CD4-positive, alpha-beta memory T cell (primary cell): ENCODE measurements at regions of chr12 and their contacts with region 1.

Region 1: DNA sequence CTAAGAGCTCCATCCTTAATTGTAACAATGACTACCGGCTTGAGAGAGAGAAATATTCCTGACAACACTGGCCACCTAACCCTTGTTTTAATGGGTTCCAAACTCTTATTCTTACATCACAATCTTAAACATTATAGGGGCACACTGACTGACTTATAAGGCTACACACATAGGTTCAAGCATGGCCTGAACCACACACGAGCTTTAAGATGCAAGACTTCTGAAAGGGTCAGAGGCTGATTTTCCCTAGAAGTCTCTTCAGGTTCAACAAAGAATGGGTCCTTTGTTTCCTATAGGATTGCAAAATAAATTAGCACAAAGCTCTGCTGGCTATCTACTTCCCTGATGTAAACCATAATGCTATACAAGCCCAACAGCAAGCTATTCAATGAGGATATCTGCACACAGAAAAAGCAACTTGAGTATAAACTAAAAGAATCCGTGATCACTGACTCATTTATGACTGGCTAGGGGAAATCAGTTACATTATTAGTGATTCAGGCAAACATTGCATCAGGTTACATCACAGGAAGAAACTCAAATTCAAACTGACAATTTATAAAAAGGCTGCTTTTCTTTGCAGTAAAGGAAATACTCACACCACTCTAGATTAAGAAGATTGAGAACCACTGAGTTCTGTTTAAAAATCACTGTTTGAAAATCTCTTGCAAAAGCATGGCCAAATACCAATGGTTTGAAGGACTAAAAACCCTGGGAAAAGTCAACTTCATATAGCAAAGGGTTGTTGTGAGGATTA is 8.5 kb downstream of the BTG1 start:
- DNase-seq: no peak
- H3K4me3 ChIP-seq: peak overlapping the region; percentile 83 to 89
- H3K4me3 Mint-ChIP-seq: peak overlapping the region; percentile 87 to 100 (median 100)
- H3K27ac ChIP-seq: peak overlapping the region; percentile 86
- H3K27ac Mint-ChIP-seq: peak overlapping the region; percentile 83 to 100 (median 99)
- H3K4me1 ChIP-seq: peaks cover 52% of the 10 kb centered on the region
- H3K4me1 Mint-ChIP-seq: peaks cover 43 to 59% (median 49%) of the 10 kb centered on the region in 4 donors
- H3K27me3 ChIP-seq: no peaks in the 10 kb centered on the region
- H3K27me3 Mint-ChIP-seq: no peaks in the 10 kb centered on the region

Region 2: DNA sequence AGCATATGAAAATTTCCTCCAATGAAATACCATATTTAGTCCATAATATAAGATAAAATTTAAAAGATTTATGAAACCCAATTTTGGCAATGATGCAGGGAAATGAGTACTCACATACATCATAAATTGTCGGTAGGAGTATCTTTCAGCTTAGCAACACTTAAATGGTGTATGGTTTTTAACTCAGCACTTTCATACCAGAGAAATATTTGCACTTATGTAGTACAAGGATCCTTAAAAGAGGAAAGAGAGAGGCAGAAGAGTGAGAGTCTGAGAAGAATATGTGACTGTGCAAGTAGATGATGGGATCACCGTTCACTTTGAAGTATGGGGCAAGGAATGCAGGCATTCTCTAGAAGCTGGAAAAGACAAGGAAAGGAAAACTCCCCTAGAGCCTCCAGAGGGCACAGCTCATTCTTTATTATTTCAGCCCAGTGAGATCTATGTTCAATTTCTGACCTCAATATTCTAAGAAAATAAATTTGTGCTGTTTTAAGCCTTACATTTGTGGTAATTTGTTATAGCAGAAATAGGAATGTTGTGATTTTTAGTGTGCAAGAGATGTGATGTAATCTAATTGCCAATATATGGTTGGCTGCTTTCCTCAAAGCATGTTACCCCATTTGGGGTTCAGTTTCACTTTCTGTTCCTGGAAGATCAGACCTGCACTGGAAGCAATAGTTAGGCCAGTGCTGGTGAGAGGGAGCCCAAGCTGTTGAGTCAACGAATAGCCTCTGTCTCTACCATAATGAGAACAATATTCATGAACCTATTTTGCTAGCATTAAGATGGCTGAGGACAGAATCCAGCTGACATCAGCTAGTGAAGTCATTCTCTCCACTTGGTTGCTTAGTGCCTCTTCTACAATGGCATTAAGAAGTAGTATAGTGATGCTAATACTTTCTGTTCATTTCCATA is 574.9 kb before region 1 on chr12:
- CTCF ChIA-PET with region 1: no interaction called
- POLR2A ChIA-PET with region 1: interaction called, 11 read pairs
- intact Hi-C with region 1: no loop called
- DNase-seq: peak in 4 of 5 donors; percentile 11 to 25 (median 14)
- H3K4me3 ChIP-seq: no peak overlapping the region
- H3K4me3 Mint-ChIP-seq: peak overlapping the region; percentile 25 to 77 (median 64)
- H3K27ac ChIP-seq: no peak overlapping the region
- H3K27ac Mint-ChIP-seq: peak overlapping the region in 6 of 7 donors; percentile 15 to 78 (median 44)
- H3K4me1 ChIP-seq: peaks cover 16% of the 10 kb centered on the region
- H3K4me1 Mint-ChIP-seq: peaks cover 18 to 27% (median 19%) of the 10 kb centered on the region in 4 donors
- H3K27me3 ChIP-seq: no peaks in the 10 kb centered on the region
- H3K27me3 Mint-ChIP-seq: no peaks in the 10 kb centered on the region

Region 3: GRCh38 chr12:91991399-91992187 is 145.6 kb before region 1 on chr12:
- CTCF ChIA-PET with region 1: interaction called, 52 read pairs
- POLR2A ChIA-PET with region 1: interaction called, 183 read pairs
- intact Hi-C with region 1: no loop called
- DNase-seq: peak in 4 of 5 donors; percentile 51 to 67 (median 54)
- H3K4me3 ChIP-seq: no peak overlapping the region
- H3K4me3 Mint-ChIP-seq: no peak overlapping the region
- H3K27ac ChIP-seq: no peak overlapping the region
- H3K27ac Mint-ChIP-seq: peak overlapping the region in 5 of 7 donors; percentile 22 to 85 (median 70)
- H3K4me1 ChIP-seq: peaks cover 27% of the 10 kb centered on the region
- H3K4me1 Mint-ChIP-seq: peaks cover 18 to 37% (median 28%) of the 10 kb centered on the region in 4 donors
- H3K27me3 ChIP-seq: no peaks in the 10 kb centered on the region
- H3K27me3 Mint-ChIP-seq: no peaks in the 10 kb centered on the region

Region 4: GRCh38 chr12:92041742-92042141 is 95.4 kb before region 1 on chr12:
- CTCF ChIA-PET with region 1: interaction called, 25 read pairs
- POLR2A ChIA-PET with region 1: interaction called, 525 read pairs
- intact Hi-C with region 1: no loop called
- DNase-seq: peak; percentile 42 to 58 (median 48)
- H3K4me3 ChIP-seq: no peak overlapping the region
- H3K4me3 Mint-ChIP-seq: peak overlapping the region in 7 of 8 donors; percentile 14 to 84 (median 64)
- H3K27ac ChIP-seq: no peak overlapping the region
- H3K27ac Mint-ChIP-seq: peak overlapping the region; percentile 54 to 90 (median 82)
- H3K4me1 ChIP-seq: peaks cover 69% of the 10 kb centered on the region
- H3K4me1 Mint-ChIP-seq: peaks cover 46 to 87% (median 63%) of the 10 kb centered on the region in 4 donors
- H3K27me3 ChIP-seq: no peaks in the 10 kb centered on the region
- H3K27me3 Mint-ChIP-seq: no peaks in the 10 kb centered on the region

Region 5: DNA sequence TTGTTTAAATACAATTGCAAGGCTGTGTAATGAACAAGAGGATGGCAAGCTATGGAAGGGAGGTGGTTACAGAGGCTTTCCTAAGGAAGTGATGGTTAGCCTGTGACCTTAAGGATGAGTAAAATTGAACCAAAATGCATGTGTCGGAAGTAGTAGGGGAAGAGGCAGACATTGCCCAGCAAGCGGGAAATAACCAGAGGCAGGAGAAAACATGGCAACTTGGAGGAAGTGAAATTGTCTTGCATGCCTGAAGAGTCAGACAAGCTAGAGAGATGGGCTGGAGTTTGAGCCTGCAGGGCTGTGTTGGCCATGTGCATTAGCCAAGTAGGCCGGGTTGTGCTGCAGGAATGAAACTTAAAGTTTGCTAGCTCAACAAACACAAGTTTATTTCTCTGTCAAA is 87.7 kb before region 1 on chr12:
- CTCF ChIA-PET with region 1: interaction called, 4 read pairs
- POLR2A ChIA-PET with region 1: interaction called, 525 read pairs
- intact Hi-C with region 1: no loop called
- DNase-seq: peak in 1 of 5 donors; percentile 35
- H3K4me3 ChIP-seq: no peak overlapping the region
- H3K4me3 Mint-ChIP-seq: peak overlapping the region in 2 of 8 donors; percentile 49 to 51
- H3K27ac ChIP-seq: no peak overlapping the region
- H3K27ac Mint-ChIP-seq: peak overlapping the region in 2 of 7 donors; percentile 11 to 31
- H3K4me1 ChIP-seq: peaks cover 56% of the 10 kb centered on the region
- H3K4me1 Mint-ChIP-seq: peaks cover 36 to 82% (median 59%) of the 10 kb centered on the region in 4 donors
- H3K27me3 ChIP-seq: no peaks in the 10 kb centered on the region
- H3K27me3 Mint-ChIP-seq: no peaks in the 10 kb centered on the region

Region 6: GRCh38 chr12:92059976-92060375 is 77.2 kb before region 1 on chr12:
- CTCF ChIA-PET with region 1: interaction called, 3 read pairs
- POLR2A ChIA-PET with region 1: interaction called, 113 read pairs
- intact Hi-C with region 1: loop called (anchors 5 kb)
- DNase-seq: no peak
- H3K4me3 ChIP-seq: no peak overlapping the region
- H3K4me3 Mint-ChIP-seq: peak overlapping the region in 1 of 8 donors; percentile 75
- H3K27ac ChIP-seq: no peak overlapping the region
- H3K27ac Mint-ChIP-seq: peak overlapping the region in 4 of 7 donors; percentile 10 to 93 (median 30)
- H3K4me1 ChIP-seq: peaks cover 53% of the 10 kb centered on the region
- H3K4me1 Mint-ChIP-seq: peaks cover 44 to 88% (median 68%) of the 10 kb centered on the region in 4 donors
- H3K27me3 ChIP-seq: no peaks in the 10 kb centered on the region
- H3K27me3 Mint-ChIP-seq: no peaks in the 10 kb centered on the region

Region 7: GRCh38 chr12:92123780-92124688 is 13.1 kb before region 1 on chr12:
- CTCF ChIA-PET with region 1: interaction called, 59 read pairs
- POLR2A ChIA-PET with region 1: interaction called, 441 read pairs
- intact Hi-C with region 1: loop called (anchors 2 kb)
- DNase-seq: no peak
- H3K4me3 ChIP-seq: no peak overlapping the region
- H3K4me3 Mint-ChIP-seq: peak overlapping the region in 2 of 8 donors; percentile 2 to 43
- H3K27ac ChIP-seq: no peak overlapping the region
- H3K27ac Mint-ChIP-seq: peak overlapping the region in 4 of 7 donors; percentile 10 to 83 (median 48)
- H3K4me1 ChIP-seq: peaks cover 36% of the 10 kb centered on the region
- H3K4me1 Mint-ChIP-seq: peaks cover 29 to 65% (median 43%) of the 10 kb centered on the region in 4 donors
- H3K27me3 ChIP-seq: no peaks in the 10 kb centered on the region
- H3K27me3 Mint-ChIP-seq: no peaks in the 10 kb centered on the region